ENCODE measurements at regions of chr1 and their contacts with region 1.

Region 1: DNA sequence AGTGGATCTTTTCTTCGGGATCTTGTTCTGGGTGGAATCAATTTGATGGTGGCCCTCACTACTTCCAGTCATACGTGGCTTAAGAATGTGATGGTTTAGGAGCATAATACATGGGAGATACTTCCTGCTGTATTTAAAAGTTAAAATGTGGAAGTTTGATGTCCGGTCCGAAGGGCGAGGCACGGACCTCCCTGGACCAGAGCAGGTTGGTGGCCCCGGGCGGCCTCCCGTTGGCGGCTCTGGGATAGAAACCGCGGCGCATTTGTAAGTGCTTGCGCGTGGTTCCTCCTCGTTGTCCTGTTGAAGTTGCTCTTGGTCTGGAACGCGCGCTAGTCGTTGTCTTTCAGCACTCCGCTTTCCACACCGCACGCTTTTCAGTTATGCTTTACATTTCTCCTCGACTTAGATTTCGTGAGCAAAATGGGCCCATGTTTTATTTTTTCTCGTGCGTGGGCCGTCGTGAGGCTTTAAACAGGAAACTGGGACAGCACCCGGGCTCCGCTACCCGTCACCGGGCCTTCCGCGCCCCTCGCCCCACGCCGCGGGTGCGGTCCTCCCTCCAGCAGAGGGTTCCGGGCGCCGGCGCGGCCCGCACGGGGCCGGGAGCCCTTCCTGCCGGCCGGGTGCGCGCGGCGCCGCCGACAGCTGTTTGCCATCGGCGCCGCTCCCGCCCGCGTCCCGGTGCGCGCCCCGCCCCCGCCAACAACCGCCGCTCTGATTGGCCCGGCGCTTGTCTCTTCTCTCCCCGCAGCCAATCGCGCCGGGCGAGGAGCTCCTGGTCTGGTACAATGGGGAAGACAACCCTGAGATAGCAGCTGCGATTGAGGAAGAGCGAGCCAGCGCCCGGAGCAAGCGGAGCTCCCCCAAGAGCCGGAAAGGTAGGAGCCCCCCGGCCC is 48.9 kb downstream of the PRDM2 start:
- DNase-seq: peak; percentile 99

Region 2: DNA sequence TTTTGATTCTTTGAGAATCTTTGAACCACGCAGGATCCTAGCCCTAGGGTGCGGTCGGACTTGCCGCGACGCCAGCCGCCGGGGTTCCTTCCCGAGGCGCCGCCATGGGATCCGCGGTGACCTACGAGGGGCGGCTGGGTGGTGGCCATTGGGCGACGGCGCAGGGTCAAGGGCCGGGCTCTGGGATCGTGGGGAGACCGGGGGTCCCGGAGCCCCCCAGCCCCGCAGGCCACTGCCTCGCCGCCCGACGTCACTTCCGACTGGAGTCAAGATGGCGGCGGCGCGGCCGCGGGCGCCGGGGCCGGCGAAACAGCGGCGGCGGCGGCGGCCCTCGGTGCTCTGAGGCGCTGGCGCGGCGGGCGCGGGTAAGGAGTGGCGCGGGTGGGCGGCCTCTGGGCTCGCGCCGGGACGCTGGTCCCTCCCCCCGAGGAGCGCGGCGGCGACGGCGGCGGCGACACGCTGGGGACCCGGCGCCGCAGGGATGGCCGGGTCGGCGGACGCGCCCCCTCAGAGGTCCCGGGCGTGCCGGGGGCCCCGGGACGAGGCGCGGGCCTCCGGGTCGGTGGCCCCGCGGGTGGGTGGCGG is 48.8 kb before region 1 on chr1 and contains the start of gene PRDM2:
- intact Hi-C with region 1: loop called in 1 of 2 experiments (anchors 2 kb)
- DNase-seq: peak; percentile 88
- total RNA-seq, gene PRDM2: 41.7 to 46.3 TPM

Region 3: DNA sequence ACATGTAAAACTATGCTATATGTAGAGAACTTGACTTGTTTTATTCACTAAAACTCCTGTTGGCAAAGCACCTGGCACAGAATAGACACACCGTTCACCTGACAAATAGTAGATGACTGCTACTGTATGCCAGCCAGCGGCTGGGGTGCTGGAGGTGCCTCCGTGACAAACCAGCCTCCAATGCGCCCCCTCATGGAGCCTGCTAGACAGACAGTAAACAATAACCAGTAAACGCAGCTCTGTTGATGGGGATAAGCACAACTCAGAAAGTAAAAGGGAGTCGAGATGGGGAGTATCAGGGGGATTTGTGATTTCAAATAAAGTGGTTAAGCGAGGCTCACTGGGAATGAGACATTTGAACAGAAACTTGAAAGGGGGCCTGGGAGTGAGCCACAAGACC is 58.4 kb after region 1 on chr1:
- intact Hi-C with region 1: loop called in 1 of 2 experiments (anchors 10 kb)
- DNase-seq: no peak